ENCODE measurements at regions of chr6 and their contacts with region 1.

Region 1: GRCh38 chr6:125834348-125834747 is 43.6 kb downstream of the NCOA7 start:
- DNase-seq: peak in 4 of 5 donors; percentile 24 to 50 (median 38)
- H3K4me3 ChIP-seq: no peak overlapping the region
- H3K4me3 Mint-ChIP-seq: peak overlapping the region; percentile 16 to 78 (median 40)
- H3K27ac ChIP-seq: no peak overlapping the region
- H3K27ac Mint-ChIP-seq: peak overlapping the region; percentile 49 to 95 (median 81)
- H3K4me1 ChIP-seq: peaks cover 62% of the 10 kb centered on the region
- H3K4me1 Mint-ChIP-seq: peaks cover 54 to 78% (median 64%) of the 10 kb centered on the region in 4 donors
- H3K27me3 ChIP-seq: no peaks in the 10 kb centered on the region
- H3K27me3 Mint-ChIP-seq: no peaks in the 10 kb centered on the region

Region 2: GRCh38 chr6:125821825-125822281 is 12.5 kb before region 1 on chr6:
- CTCF ChIA-PET with region 1: interaction called, 4 read pairs
- POLR2A ChIA-PET with region 1: interaction called, 7 read pairs
- intact Hi-C with region 1: loop called (anchors 2 kb)
- DNase-seq: no peak
- H3K4me3 ChIP-seq: no peak overlapping the region
- H3K4me3 Mint-ChIP-seq: peak overlapping the region in 3 of 8 donors; percentile 18 to 40 (median 38)
- H3K27ac ChIP-seq: no peak overlapping the region
- H3K27ac Mint-ChIP-seq: peak overlapping the region in 4 of 7 donors; percentile 11 to 63 (median 50)
- H3K4me1 ChIP-seq: peaks cover 39% of the 10 kb centered on the region
- H3K4me1 Mint-ChIP-seq: peaks cover 42 to 68% (median 50%) of the 10 kb centered on the region in 4 donors
- H3K27me3 ChIP-seq: no peaks in the 10 kb centered on the region
- H3K27me3 Mint-ChIP-seq: no peaks in the 10 kb centered on the region

Region 3: GRCh38 chr6:125858427-125859320 is 24.3 kb after region 1 on chr6:
- CTCF ChIA-PET with region 1: interaction called, 4 read pairs
- POLR2A ChIA-PET with region 1: no interaction called
- intact Hi-C with region 1: loop called (anchors 2 kb)
- DNase-seq: peak; percentile 8 to 40 (median 19)
- H3K4me3 ChIP-seq: no peak overlapping the region
- H3K4me3 Mint-ChIP-seq: peak overlapping the region in 1 of 8 donors; percentile 15
- H3K27ac ChIP-seq: no peak overlapping the region
- H3K27ac Mint-ChIP-seq: peak overlapping the region in 5 of 7 donors; percentile 62 to 87 (median 70)
- H3K4me1 ChIP-seq: peaks cover under 1% of the 10 kb centered on the region
- H3K4me1 Mint-ChIP-seq: peaks cover 7 to 11% (median 10%) of the 10 kb centered on the region in 4 donors
- H3K27me3 ChIP-seq: no peaks in the 10 kb centered on the region
- H3K27me3 Mint-ChIP-seq: no peaks in the 10 kb centered on the region

Region 4: DNA sequence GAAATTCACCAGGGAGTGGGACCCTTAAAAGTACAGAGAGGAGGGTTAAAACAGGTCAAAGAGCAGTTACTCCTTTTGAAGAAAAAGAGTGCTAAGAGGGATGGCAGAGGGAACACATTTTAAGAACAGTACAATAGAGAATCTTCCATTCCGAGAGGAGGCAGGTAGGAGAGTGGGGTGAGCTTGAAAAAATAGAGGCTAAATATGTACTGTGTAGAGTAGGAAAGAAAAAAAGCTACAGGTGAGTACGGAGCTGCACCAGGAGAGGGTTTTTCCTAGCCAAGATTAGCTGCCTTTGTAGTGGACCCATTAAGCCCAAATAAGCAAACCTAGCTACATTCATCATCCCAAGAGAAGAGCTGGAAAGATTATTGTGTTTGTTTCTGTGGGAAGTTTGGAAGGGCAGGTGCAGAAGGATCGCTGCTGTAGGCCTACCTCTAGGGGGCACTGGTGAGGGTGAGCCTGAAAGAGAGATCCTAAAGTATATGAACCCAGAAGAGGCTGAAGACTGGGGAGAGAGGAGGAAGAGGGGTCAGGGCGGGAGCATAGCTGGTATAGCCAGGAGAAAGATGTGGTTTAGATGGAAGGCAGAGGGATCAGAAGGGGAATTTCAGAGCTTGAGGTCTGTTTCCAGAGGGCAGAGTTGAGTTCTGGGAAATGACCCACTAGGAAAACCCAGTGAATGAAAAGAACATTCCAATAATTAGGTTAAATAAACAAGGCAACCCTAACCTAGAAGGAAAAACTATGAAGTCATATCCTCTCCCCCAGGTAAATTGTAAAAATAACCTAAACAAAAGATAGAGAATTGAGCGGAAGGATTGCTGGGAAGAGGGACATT is 72.0 kb after region 1 on chr6:
- CTCF ChIA-PET with region 1: interaction called, 10 read pairs
- POLR2A ChIA-PET with region 1: interaction called, 3 read pairs
- intact Hi-C with region 1: no loop called
- DNase-seq: peak; percentile 22 to 44 (median 39)
- H3K4me3 ChIP-seq: no peak overlapping the region
- H3K4me3 Mint-ChIP-seq: peak overlapping the region in 1 of 8 donors; percentile 21
- H3K27ac ChIP-seq: no peak overlapping the region
- H3K27ac Mint-ChIP-seq: peak overlapping the region; percentile 9 to 86 (median 68)
- H3K4me1 ChIP-seq: peaks cover 11% of the 10 kb centered on the region
- H3K4me1 Mint-ChIP-seq: peaks cover 16 to 33% (median 21%) of the 10 kb centered on the region in 4 donors
- H3K27me3 ChIP-seq: no peaks in the 10 kb centered on the region
- H3K27me3 Mint-ChIP-seq: no peaks in the 10 kb centered on the region

Region 5: DNA sequence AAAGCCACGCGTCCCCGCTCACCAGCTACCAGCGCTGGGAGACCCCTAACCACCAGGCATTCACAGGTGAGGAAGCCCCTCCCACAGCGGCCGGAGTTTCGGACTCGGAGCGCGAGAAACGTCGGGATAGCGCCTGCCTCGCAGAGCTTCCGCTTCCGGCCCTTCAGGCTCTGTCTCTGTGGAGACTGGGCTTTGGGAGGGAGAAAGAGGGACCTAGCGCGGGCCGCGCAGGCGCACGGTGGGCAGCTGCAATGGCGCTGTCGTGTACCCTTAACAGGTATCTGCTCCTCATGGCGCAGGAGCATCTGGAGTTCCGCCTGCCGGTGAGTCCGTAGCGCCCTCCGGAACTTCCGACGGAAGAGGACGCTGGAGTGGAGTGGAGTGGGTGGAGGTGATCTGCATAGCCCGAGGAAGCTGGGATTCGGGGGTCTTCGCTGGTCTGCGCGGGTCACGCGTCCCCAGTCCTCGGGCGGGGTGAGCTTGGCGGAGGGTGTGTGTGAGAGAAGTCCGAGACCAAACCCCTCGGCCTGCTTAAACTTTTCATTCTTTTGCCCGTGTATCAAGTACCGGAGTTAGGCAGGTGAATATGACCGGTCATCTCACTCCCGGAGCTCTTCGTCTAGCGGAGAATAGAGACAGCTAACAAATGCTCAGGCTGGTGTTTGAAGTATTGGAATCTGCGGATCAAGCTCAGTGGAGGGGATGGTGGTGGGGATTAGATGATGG is 152.1 kb after region 1 on chr6 and contains the start of gene TRMT11:
- CTCF ChIA-PET with region 1: no interaction called
- POLR2A ChIA-PET with region 1: interaction called, 11 read pairs
- intact Hi-C with region 1: no loop called
- DNase-seq: peak; percentile 80 to 86 (median 81)
- H3K4me3 ChIP-seq: peak within 1 kb of the TSS; percentile 93 to 95
- H3K4me3 Mint-ChIP-seq: peak within 1 kb of the TSS; percentile 6 to 57 (median 24)
- H3K27ac ChIP-seq: peak within 1 kb of the TSS; percentile 77
- H3K27ac Mint-ChIP-seq: no peak within 1 kb of the TSS
- H3K4me1 ChIP-seq: peaks cover 31% of the 10 kb centered on the region
- H3K4me1 Mint-ChIP-seq: peaks cover 2 to 15% (median 8%) of the 10 kb centered on the region in 4 donors
- H3K27me3 ChIP-seq: no peaks in the 10 kb centered on the region
- H3K27me3 Mint-ChIP-seq: no peaks in the 10 kb centered on the region
- total RNA-seq, gene TRMT11: 25.5 to 30.8 TPM

Measured in CD4-positive, alpha-beta memory T cell (primary cell).